ENCODE measurements at regions of chr4 and their contacts with region 1.

Region 1: GRCh38 chr4:8599657-8600056 is 7.1 kb downstream of the CPZ start:
- DNase-seq: peak; percentile 66 to 80 (median 74)
- H3K4me3 ChIP-seq: no peak overlapping the region
- H3K27ac ChIP-seq: peak overlapping the region in 1 of 2 donors; percentile 60
- H3K4me1 ChIP-seq: peaks cover 28% of the 10 kb centered on the region
- H3K27me3 ChIP-seq: no peaks in the 10 kb centered on the region
- CTCF ChIP-seq: no peak
- EP300 ChIP-seq: no peak
- POLR2A ChIP-seq: no peak

Region 2: DNA sequence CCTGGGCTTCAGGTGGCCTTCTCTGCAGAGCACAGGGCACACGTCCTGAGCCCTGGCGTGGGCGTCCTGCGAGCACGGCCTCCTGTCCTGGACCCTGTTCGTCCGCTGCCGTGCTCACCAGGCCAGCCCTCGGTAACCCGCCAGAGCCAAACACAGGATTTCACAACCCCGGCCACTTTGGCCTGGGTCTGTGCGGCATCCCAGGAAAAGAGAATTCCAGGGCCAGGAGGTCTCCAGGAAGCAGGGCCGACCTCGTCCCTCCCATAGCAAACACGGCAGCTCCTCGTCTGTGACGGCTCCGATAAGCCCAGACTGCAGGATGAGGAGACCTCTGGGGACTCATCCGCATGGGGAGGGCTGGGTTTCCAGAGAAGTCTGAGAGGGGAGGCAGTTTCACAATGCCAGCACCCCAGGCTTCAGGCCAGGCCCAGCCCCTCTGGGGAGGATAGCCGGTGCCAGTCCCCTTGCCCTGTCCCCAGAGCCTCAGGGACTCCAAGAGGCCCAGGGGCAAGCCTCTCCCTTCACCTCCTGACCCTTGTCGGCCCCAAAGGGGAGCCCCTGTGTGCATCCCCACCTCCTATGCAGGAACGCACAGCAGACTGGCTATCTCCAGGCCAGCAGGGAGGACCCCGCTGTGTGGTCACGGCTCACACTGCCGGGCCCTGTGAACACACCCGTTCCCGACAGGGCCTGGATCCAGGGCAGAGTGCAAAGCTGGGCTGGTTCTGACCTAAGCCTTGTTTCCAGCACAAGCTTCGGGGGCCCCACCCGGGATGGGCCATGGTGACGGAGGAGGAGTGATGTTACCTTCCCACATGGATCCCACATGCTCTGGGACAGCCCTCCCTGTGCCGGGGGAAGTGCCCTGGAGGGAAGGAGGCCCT is 352.4 kb before region 1 on chr4:
- intact Hi-C with region 1: loop called in 2 of 4 experiments (anchors 5 to 10 kb)
- DNase-seq: peak in 1 of 5 donors; percentile 60
- H3K4me3 ChIP-seq: no peak overlapping the region
- H3K27ac ChIP-seq: no peak overlapping the region
- H3K4me1 ChIP-seq: peaks cover 2% of the 10 kb centered on the region
- H3K27me3 ChIP-seq: no peaks in the 10 kb centered on the region
- CTCF ChIP-seq: no peak
- EP300 ChIP-seq: no peak
- POLR2A ChIP-seq: no peak

Region 3: GRCh38 chr4:8383451-8384160 is 216.1 kb before region 1 on chr4:
- intact Hi-C with region 1: no loop called
- DNase-seq: peak in 3 of 5 donors; percentile 35 to 61 (median 51)
- H3K4me3 ChIP-seq: no peak overlapping the region
- H3K27ac ChIP-seq: no peak overlapping the region
- H3K4me1 ChIP-seq: peaks cover 15% of the 10 kb centered on the region
- H3K27me3 ChIP-seq: no peaks in the 10 kb centered on the region
- CTCF ChIP-seq: no peak
- EP300 ChIP-seq: no peak
- POLR2A ChIP-seq: no peak